ENCODE measurements at regions of chr12 and their contacts with region 1.

Region 1: GRCh38 chr12:120725659-120726509 is at the start of gene ACADS:
- DNase-seq: peak; percentile 94 to 95
- H3K4me3 ChIP-seq: peak within 1 kb of the TSS; percentile 8 to 81 (median 80)
- H3K27ac ChIP-seq: peak within 1 kb of the TSS; percentile 50 to 87 (median 74)
- H3K4me1 ChIP-seq: peaks cover 7 to 19% of the 10 kb centered on the region in 2 donors
- H3K27me3 ChIP-seq: no peaks in the 10 kb centered on the region
- CTCF ChIP-seq: peak in 1 of 6 experiments; percentile 10
- POLR2A ChIP-seq: peak; percentile 28 to 91
- total RNA-seq, gene ACADS: 40.8 to 85.9 (median 65.1) TPM

Region 2: GRCh38 chr12:120783197-120783596 is 57.3 kb after region 1 on chr12:
- intact Hi-C with region 1: no loop called
- DNase-seq: no peak
- H3K4me3 ChIP-seq: no peak overlapping the region
- H3K27ac ChIP-seq: peak overlapping the region in 1 of 3 donors; percentile 8
- H3K4me1 ChIP-seq: no peaks in the 10 kb centered on the region
- H3K27me3 ChIP-seq: no peaks in the 10 kb centered on the region
- CTCF ChIP-seq: no peak
- POLR2A ChIP-seq: no peak

Region 3: GRCh38 chr12:120904197-120904773 is 178.4 kb after region 1 on chr12 and contains the start of gene SPPL3:
- intact Hi-C with region 1: loop called (anchors 10 kb)
- DNase-seq: peak; percentile 92 to 93
- H3K4me3 ChIP-seq: peak within 1 kb of the TSS; percentile 60 to 94 (median 93)
- H3K27ac ChIP-seq: peak within 1 kb of the TSS; percentile 77 to 92 (median 88)
- H3K4me1 ChIP-seq: peaks cover 15 to 17% of the 10 kb centered on the region in 2 donors
- H3K27me3 ChIP-seq: no peaks in the 10 kb centered on the region
- CTCF ChIP-seq: peak in 2 of 6 experiments; percentile 9 to 25
- POLR2A ChIP-seq: peak in 1 of 2 donors; percentile 82
- total RNA-seq, gene SPPL3: 25.7 to 37.5 (median 34.7) TPM

Measured in thyroid gland (tissue), 4 donors.